OCI-LY7 (cell line): ENCODE measurements at regions of chr12 and their contacts with region 1.

Region 1: DNA sequence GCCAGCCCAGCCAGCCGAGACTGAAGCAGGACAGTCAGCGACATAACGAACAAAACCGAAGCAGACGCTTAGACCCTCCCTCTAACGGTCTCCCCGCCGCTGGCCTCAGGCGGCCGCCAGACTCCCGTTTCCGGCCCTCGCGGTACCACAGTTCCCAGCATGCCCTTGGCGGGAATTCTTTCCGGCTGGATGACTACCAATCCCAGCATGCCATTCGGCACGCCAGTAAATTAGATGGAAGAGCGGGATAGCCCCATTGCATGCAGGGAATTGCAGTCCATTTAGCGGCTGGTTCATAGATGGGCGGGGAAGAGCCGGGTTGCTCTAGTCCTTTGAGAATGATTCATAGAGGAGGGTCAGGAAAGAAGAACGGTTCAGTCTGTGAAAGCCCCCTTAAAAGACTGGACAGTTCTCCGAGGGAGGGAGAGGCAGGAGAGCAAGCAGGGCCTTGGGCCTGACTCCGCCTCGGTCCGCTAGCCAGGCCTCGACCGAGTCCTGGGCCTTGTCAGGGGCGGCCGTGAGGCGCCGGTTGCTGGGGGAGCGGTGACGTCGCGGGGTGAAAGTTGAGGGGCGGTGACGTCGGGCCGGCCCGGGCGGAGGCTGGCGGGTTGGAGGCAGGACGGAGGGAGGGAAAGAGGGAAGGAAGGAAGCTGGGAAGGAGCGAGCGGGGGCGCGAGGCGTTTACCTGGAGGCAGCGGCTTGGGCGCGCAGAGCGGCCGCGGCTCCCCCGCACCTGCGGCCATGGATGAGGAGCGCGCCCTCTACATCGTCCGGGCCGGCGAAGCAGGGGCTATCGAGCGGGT is at the start of gene RIC8B:
- DNase-seq: no peak
- H3K4me3 ChIP-seq: no peak within 1 kb of the TSS
- H3K27ac ChIP-seq: no peak within 1 kb of the TSS
- H3K4me1 ChIP-seq: no peaks in the 10 kb centered on the region
- CTCF ChIP-seq: no peak
- total RNA-seq, gene RIC8B: not detected in 2 replicates

Region 2: DNA sequence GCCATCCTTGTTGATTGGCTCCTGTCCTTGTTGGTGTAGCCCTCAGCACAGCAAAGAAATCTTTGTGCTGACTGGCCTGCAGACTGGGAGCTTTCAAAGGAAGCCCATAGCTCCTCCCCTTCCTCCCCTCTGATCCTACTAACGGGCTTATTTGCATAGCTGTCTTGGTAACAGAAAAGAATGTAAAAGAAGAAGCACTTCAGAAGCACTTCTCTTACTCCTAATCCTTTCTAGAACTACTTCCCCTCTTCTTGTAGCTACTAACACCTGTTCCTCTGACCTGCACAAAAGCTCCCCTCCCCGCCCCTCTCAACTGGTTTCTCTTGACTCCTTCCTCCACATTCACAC is 14.0 kb before region 1 on chr12:
- CTCF ChIA-PET with region 1: no interaction called
- POLR2A ChIA-PET with region 1: interaction called, 12 read pairs
- intact Hi-C with region 1: loop called (anchors 1 kb)
- DNase-seq: peak; percentile 95
- H3K4me3 ChIP-seq: peak overlapping the region; percentile 59
- H3K27ac ChIP-seq: peak overlapping the region; percentile 64
- H3K4me1 ChIP-seq: peaks cover 34% of the 10 kb centered on the region
- CTCF ChIP-seq: no peak